OCI-LY7 (cell line): ENCODE measurements at regions of chr18 and their contacts with region 1.

Region 1: GRCh38 chr18:2448565-2449151 is 122.6 kb downstream of the METTL4 start:
- DNase-seq: no peak
- H3K4me3 ChIP-seq: no peak overlapping the region
- H3K27ac ChIP-seq: no peak overlapping the region
- H3K4me1 ChIP-seq: peaks cover 13% of the 10 kb centered on the region
- CTCF ChIP-seq: no peak

Region 2: DNA sequence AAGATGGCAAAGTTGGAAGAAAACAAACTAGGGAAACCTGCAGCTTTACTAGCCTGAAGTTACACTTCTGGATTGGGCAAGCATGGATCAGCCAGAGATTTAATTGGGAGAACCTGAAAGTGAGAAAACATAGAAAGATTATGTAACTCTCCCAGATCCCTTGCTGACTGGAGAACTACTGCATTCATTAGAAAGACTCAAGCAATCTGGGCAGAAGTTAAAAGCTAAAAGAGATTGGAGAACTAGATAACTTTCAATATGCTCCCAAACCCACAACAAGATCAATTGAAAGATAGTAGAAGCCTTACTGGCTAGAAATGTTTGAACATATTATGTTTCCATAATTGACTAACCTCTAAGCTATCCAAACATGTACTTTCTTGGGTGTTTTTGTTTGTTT is 63.2 kb before region 1 on chr18:
- CTCF ChIA-PET with region 1: no interaction called
- POLR2A ChIA-PET with region 1: no interaction called
- intact Hi-C with region 1: loop called (anchors 5 kb)
- DNase-seq: no peak
- H3K4me3 ChIP-seq: no peak overlapping the region
- H3K27ac ChIP-seq: no peak overlapping the region
- H3K4me1 ChIP-seq: no peaks in the 10 kb centered on the region
- CTCF ChIP-seq: no peak

Region 3: GRCh38 chr18:2459886-2460285 is 11.2 kb after region 1 on chr18:
- CTCF ChIA-PET with region 1: no interaction called
- POLR2A ChIA-PET with region 1: interaction called, 12 read pairs
- intact Hi-C with region 1: no loop called
- DNase-seq: no peak
- H3K4me3 ChIP-seq: no peak overlapping the region
- H3K27ac ChIP-seq: no peak overlapping the region
- H3K4me1 ChIP-seq: no peaks in the 10 kb centered on the region
- CTCF ChIP-seq: no peak